Activated T-helper 2 cell treated with anti-CD3 and anti-CD28 coated beads, Interferon-gamma antibody, Interleukin-2, Interleukin-4, amounts not matched to agents 10 μg/mL and 5 μg/mL and 100 μg/mL, durations not matched to agents 14 hours and 24 hours and 36 hours (primary cell): ENCODE measurements at regions of chr5 and their contacts with region 1.

Region 1: DNA sequence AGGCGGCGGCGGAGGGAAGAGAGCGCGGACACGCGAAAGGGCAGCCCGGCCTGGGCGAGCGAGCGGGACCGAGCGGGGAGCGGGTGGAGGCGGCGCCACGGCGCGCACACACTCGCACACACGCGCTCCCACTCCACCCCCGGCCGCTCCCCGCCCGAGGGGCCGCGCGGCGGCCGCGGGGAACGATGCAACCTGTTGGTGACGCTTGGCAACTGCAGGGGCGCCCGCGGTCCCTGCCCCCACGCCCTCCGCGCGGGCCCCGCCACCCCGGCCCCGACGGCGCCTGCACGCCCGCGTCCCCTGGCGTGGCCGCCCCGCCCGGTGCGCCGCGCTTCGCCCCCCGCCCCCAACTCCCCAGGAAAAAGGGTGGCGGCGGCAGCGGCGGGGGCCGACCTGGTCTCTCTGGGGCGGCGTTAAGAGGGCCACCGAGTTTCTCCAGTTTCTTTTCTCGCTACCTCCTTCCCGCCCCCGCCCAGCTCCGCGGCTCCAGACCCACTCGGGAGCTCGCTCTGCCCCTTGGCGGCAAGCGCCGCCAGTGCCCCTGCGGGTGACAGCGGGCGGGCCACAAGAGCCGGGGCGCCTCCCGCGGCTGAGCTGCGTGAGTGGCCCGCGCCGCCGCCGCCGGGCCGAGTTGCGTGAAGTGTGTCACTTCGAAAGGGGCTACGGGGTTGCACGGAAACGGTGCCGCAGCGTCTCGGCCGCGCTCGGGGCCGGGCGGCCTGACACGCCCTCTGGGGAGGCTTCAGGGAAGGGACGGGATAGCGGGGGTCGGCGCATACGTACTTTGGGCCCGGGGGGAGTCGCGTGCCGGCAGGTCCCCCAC is at the start of gene NR3C1:
- DNase-seq: peak; percentile 81
- H3K4me3 Mint-ChIP-seq: peak within 1 kb of the TSS; percentile 88
- H3K27ac Mint-ChIP-seq: peak within 1 kb of the TSS; percentile 97
- H3K4me1 Mint-ChIP-seq: peaks cover 45% of the 10 kb centered on the region
- H3K27me3 Mint-ChIP-seq: no peaks in the 10 kb centered on the region
- total RNA-seq, gene NR3C1: 51.3 and 52.0 TPM in 2 replicates

Region 2: GRCh38 chr5:143002459-143003328 is 401.1 kb before region 1 on chr5:
- intact Hi-C with region 1: loop called (anchors 2 kb)
- DNase-seq: peak; percentile 65
- H3K4me3 Mint-ChIP-seq: peak overlapping the region; percentile 54
- H3K27ac Mint-ChIP-seq: peak overlapping the region; percentile 91
- H3K4me1 Mint-ChIP-seq: peaks cover 73% of the 10 kb centered on the region
- H3K27me3 Mint-ChIP-seq: no peaks in the 10 kb centered on the region

Region 3: DNA sequence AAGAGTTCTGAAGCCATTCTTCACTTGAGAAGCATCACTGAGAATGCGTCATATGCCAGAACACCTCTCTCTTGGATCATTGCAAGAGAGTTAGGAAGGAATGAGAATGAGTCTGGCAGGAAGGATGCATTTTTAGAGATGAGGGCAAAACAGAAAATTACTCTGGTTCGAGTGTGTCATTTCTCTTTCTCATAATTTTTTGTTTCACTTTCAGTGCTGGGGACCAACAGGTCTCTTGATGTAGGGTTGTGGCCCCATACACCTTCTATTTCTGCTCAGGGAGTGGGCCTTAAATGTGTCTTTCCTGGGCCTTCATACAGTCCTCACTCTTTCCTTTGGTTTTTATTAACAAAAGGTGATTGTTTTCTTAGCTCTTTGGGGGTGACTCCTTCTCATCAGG is 302.7 kb before region 1 on chr5:
- intact Hi-C with region 1: loop called (anchors 1 kb)
- DNase-seq: no peak
- H3K4me3 Mint-ChIP-seq: peak overlapping the region; percentile 52
- H3K27ac Mint-ChIP-seq: peak overlapping the region; percentile 95
- H3K4me1 Mint-ChIP-seq: peaks cover 48% of the 10 kb centered on the region
- H3K27me3 Mint-ChIP-seq: no peaks in the 10 kb centered on the region

Region 4: GRCh38 chr5:143182901-143183820 is 220.6 kb before region 1 on chr5:
- intact Hi-C with region 1: loop called (anchors 1 kb)
- DNase-seq: peak; percentile 33
- H3K4me3 Mint-ChIP-seq: peak overlapping the region; percentile 43
- H3K27ac Mint-ChIP-seq: peak overlapping the region; percentile 82
- H3K4me1 Mint-ChIP-seq: peaks cover 61% of the 10 kb centered on the region
- H3K27me3 Mint-ChIP-seq: no peaks in the 10 kb centered on the region

Region 5: DNA sequence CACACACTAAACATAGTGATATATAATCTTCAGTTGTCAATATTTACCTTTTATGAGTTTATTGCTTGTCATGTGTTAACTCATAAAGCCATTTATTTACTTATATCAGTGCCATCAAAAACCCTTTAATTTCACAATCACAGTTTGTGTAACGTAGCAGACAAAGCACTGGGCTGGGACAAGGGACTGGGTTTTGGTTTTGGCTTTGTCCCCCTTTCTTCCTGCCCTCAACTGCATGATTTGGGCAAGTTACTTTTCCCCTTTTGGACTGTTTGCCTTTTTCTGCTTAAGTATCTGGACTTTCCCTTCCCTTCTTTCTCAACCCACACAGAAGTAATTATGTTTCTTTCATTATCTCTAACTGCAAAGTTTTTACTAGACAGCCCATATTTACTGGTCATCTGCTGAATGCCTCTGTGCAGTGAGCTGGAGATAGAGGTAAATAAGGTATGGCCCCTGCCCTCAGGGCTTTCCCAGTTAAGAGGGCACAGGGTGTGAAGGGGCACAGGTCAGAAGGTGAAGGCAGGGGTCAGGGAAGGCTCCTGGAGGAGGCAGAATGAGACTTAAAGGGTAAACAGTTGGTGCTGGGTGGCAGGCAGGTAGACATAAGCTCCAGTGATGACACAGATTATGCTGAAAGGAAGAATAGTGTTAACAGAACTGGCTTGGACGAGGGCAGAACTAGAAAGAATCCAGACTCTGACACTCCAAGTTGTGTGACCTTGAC is 14.5 kb after region 1 on chr5:
- intact Hi-C with region 1: loop called (anchors 1 kb)
- DNase-seq: no peak
- H3K4me3 Mint-ChIP-seq: no peak overlapping the region
- H3K27ac Mint-ChIP-seq: peak overlapping the region; percentile 81
- H3K4me1 Mint-ChIP-seq: peaks cover 31% of the 10 kb centered on the region
- H3K27me3 Mint-ChIP-seq: no peaks in the 10 kb centered on the region

Region 6: DNA sequence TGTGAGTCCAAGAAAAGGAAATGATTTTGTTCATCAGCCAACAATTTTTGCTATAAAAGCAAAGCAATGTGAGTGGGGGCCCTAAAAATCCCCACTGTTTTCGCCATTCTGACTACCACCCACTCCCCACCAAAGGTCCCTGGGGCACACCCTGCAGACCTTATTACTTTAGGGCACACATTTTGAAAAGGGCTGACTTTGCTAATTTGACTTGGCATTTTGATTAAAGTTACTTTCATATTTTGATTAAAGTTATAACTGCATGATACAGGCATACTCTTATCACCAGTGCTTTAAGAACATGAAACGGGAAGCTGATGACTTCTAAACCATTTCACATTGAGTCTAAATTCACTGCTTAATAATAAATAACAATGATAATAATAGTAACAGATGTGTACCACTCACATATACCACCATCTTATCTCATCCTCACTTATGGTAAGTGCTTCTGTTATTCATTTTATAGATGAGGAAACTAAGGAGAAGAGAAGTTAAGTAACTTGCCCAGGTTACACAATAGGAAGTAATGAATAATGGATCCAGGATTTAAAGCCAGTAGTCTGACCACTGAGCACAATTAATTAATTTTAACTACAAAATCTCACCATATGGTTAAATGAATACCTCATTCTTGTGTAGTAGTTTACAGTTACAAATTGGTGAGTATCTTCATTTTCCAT is 25.1 kb after region 1 on chr5:
- intact Hi-C with region 1: no loop called
- DNase-seq: no peak
- H3K4me3 Mint-ChIP-seq: no peak overlapping the region
- H3K27ac Mint-ChIP-seq: no peak overlapping the region
- H3K4me1 Mint-ChIP-seq: peaks cover 40% of the 10 kb centered on the region
- H3K27me3 Mint-ChIP-seq: no peaks in the 10 kb centered on the region

Region 7: GRCh38 chr5:143679777-143680176 is 276.0 kb after region 1 on chr5:
- intact Hi-C with region 1: loop called (anchors 2 kb)
- DNase-seq: no peak
- H3K4me3 Mint-ChIP-seq: no peak overlapping the region
- H3K27ac Mint-ChIP-seq: peak overlapping the region; percentile 71
- H3K4me1 Mint-ChIP-seq: peaks cover 27% of the 10 kb centered on the region
- H3K27me3 Mint-ChIP-seq: no peaks in the 10 kb centered on the region